Lower leg skin (tissue), 4 donors: ENCODE measurements at regions of chr4 and their contacts with region 1.

Region 1: GRCh38 chr4:135434936-135435335 is 1233.3 kb upstream of the PABPC4L start:
- DNase-seq: no peak
- H3K4me3 ChIP-seq: no peak overlapping the region
- CTCF ChIP-seq: no peak
- POLR2A ChIP-seq: no peak

Region 2: GRCh38 chr4:135144498-135144897 is 290.4 kb before region 1 on chr4:
- intact Hi-C with region 1: loop called (anchors 5 kb)
- DNase-seq: no peak
- H3K4me3 ChIP-seq: no peak overlapping the region
- CTCF ChIP-seq: no peak
- POLR2A ChIP-seq: no peak

Region 3: GRCh38 chr4:135319680-135320079 is 115.3 kb before region 1 on chr4:
- intact Hi-C with region 1: loop called (anchors 2 kb)
- DNase-seq: no peak
- H3K4me3 ChIP-seq: no peak overlapping the region
- CTCF ChIP-seq: no peak
- POLR2A ChIP-seq: no peak